ENCODE measurements at regions of chr2 and their contacts with region 1.

Region 1: DNA sequence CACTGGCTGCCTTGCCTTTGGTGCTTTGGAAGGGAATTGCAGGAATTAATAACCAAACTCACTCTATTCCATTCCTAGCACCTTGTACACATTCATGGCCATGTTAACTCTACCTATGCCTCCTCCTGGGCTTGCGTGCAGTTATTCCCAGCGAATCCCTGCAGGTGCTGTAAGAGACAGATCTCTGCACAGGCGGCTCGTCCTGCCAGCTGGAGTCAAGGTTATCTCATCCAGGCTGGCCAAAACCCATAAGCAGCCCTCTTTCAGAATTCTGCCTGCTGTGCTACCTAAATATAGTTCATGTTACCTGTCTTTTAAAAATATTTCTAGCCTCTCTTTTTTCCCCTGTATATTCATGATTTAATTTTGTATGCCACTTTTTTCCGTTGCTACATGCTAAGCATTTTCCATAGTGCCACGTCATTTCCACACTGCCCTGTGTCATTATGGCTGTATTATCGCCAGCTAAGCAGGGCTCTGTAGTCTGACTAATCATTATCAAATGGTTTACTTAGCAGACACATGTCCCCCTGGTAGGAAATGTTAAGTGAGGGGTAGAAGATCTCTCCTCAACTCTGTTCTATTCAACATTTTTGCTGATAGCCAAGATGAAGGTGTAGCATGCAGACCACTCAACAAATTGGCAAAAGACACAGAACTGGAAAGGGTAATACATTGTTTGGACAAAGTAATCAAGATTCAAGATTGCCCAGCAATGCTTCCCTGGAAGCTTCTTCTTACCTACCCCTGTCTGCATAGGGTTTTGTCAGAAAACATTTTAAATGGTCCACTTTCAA is 79.7 kb upstream of the TAF1B start:
- DNase-seq: no peak
- H3K4me3 ChIP-seq: no peak overlapping the region
- CTCF ChIP-seq: no peak

Region 2: GRCh38 chr2:9699139-9700108 is 64.1 kb before region 1 on chr2:
- in situ Hi-C with region 1: loop called (anchors 5 kb)
- DNase-seq: no peak
- H3K4me3 ChIP-seq: no peak overlapping the region
- CTCF ChIP-seq: no peak

Region 3: DNA sequence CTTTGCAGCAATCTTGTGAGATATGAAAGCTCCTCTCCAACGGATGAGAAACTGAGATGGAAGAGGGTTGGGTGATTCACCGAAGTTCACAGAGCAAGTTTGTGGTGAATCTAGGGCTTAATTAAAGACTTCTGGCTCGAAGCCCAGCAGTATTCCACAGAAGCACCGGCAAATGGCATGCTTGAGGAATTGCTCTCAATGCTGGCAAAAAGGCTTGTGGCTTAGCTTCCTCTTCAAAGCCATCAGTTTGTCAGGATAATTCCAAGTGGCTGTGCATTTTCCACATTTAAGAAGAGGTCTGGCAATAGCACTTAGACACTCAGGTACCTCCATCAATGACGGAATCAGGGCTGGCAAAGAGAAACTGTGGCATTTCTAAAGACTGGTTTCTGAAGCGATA is 1293.1 kb after region 1 on chr2:
- in situ Hi-C with region 1: no loop called
- DNase-seq: peak; percentile 97
- H3K4me3 ChIP-seq: no peak overlapping the region
- CTCF ChIP-seq: no peak